ENCODE measurements at regions of chr6 and their contacts with region 1.

Region 1: DNA sequence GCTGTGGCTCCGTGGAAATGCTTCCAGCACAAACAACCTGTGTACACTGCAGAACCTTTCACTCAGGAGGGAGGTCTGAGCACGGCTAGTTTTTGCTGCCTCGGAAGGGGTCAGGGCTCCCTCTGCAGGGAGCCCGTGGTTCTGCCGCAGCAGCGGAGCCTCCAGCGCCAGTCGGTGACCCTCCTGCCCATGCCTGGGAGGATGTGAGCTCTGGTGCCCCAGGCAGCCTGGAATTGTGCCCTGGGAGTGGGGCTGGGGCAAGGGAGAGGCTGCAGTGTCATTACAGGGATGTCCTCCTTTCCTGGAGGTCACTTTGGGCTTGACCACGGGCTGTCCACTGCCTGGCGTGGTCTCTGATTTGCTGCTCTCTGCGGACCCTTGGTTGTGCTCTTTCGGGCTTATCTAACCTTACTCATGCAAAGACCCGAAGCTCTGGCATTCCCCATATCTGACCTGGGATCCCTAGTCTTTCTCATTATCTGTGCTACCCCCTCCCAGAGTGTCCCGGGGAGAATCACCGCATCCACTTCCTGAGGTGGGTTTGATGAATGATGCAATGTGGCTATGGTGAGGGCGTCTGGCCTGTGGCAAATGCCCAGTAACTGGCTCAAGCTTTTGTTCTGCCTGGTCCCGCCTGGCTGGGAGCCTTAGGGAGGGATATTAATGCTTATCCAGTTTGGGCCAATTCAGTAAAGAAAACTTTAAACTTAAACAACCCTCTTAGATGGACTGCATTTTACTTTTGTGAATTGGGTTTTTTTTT is 59.6 kb upstream of the TAGAP start:
- DNase-seq: peak; percentile 82
- ATAC-seq: peak; percentile 62
- H3K4me3 Mint-ChIP-seq: peak overlapping the region; percentile 68
- H3K27ac Mint-ChIP-seq: peak overlapping the region; percentile 91
- H3K4me1 Mint-ChIP-seq: peaks cover 87% of the 10 kb centered on the region
- H3K27me3 Mint-ChIP-seq: no peaks in the 10 kb centered on the region
- CTCF ChIP-seq: peak; percentile 97

Region 2: GRCh38 chr6:158999666-159000403 is 104.5 kb before region 1 on chr6 and contains the start of gene RSPH3:
- CTCF ChIA-PET with region 1: interaction called, 506 read pairs
- POLR2A ChIA-PET with region 1: interaction called, 20 read pairs
- intact Hi-C with region 1: no loop called
- DNase-seq: peak; percentile 96
- ATAC-seq: peak; percentile 89
- H3K4me3 Mint-ChIP-seq: peak within 1 kb of the TSS; percentile 83
- H3K27ac Mint-ChIP-seq: peak within 1 kb of the TSS; percentile 81
- H3K4me1 Mint-ChIP-seq: peaks cover 42% of the 10 kb centered on the region
- H3K27me3 Mint-ChIP-seq: no peaks in the 10 kb centered on the region
- CTCF ChIP-seq: no peak
- total RNA-seq, gene RSPH3: 4.2 TPM

Region 3: GRCh38 chr6:159017757-159018559 is 86.4 kb before region 1 on chr6:
- CTCF ChIA-PET with region 1: interaction called, 506 read pairs
- POLR2A ChIA-PET with region 1: interaction called, 18 read pairs
- intact Hi-C with region 1: loop called (anchors 2 kb)
- DNase-seq: no peak
- ATAC-seq: peak; percentile 85
- H3K4me3 Mint-ChIP-seq: peak overlapping the region; percentile 14
- H3K27ac Mint-ChIP-seq: peak overlapping the region; percentile 96
- H3K4me1 Mint-ChIP-seq: peaks cover 68% of the 10 kb centered on the region
- H3K27me3 Mint-ChIP-seq: no peaks in the 10 kb centered on the region
- CTCF ChIP-seq: no peak

Region 4: GRCh38 chr6:159042003-159042825 is 62.1 kb before region 1 on chr6:
- CTCF ChIA-PET with region 1: interaction called, 289 read pairs
- POLR2A ChIA-PET with region 1: interaction called, 766 read pairs
- intact Hi-C with region 1: loop called (anchors 2 kb)
- DNase-seq: peak; percentile 82
- ATAC-seq: peak; percentile 21
- H3K4me3 Mint-ChIP-seq: peak overlapping the region; percentile 100
- H3K27ac Mint-ChIP-seq: peak overlapping the region; percentile 100
- H3K4me1 Mint-ChIP-seq: peaks cover 53% of the 10 kb centered on the region
- H3K27me3 Mint-ChIP-seq: no peaks in the 10 kb centered on the region
- CTCF ChIP-seq: peak; percentile 96

Region 5: DNA sequence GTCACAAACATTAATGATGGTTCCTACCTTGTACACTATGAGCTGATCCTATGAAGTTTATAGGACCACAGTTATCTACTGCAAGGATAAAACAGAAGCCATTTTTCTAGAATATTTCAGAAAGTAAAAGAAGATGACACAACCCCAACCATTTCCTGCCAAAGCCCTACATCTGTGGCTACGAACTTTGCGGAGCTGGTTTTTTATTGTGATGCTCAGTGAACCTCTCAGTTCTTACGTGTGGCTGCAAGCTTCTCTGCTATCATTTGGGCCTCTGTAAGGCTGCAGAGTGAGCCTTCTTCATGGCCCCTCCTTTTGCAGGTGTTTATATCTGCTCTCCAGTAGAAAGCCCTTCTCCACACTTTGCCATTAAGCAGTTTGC is 41.8 kb before region 1 on chr6:
- CTCF ChIA-PET with region 1: interaction called, 32 read pairs
- POLR2A ChIA-PET with region 1: interaction called, 216 read pairs
- intact Hi-C with region 1: no loop called
- DNase-seq: peak; percentile 84
- ATAC-seq: peak; percentile 79
- H3K4me3 Mint-ChIP-seq: peak overlapping the region; percentile 42
- H3K27ac Mint-ChIP-seq: peak overlapping the region; percentile 95
- H3K4me1 Mint-ChIP-seq: peaks cover 98% of the 10 kb centered on the region
- H3K27me3 Mint-ChIP-seq: no peaks in the 10 kb centered on the region
- CTCF ChIP-seq: no peak

Region 6: GRCh38 chr6:159090530-159091480 is 13.5 kb before region 1 on chr6:
- CTCF ChIA-PET with region 1: interaction called, 28 read pairs
- POLR2A ChIA-PET with region 1: interaction called, 15 read pairs
- intact Hi-C with region 1: no loop called
- DNase-seq: no peak
- ATAC-seq: no peak
- H3K4me3 Mint-ChIP-seq: no peak overlapping the region
- H3K27ac Mint-ChIP-seq: peak overlapping the region; percentile 17
- H3K4me1 Mint-ChIP-seq: peaks cover 73% of the 10 kb centered on the region
- H3K27me3 Mint-ChIP-seq: no peaks in the 10 kb centered on the region
- CTCF ChIP-seq: no peak

Region 7: DNA sequence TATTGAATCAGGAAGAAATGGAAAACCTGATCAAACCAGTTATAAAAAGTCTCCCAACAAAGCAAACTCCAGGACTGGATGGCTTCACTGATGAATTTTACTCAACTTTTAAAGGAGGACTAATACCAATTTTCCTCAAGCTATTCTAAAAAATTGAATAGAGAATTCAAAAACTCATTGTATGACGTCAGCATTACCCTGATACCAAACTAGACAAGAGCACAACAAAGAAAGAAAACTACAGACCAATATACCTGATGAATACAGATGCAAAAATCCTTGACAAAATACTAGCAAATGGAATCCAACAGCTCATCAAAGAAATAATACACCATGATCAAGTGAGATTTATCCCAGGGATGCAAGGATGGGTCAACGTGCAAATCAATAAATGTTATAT is 237.8 kb after region 1 on chr6:
- CTCF ChIA-PET with region 1: no interaction called
- POLR2A ChIA-PET with region 1: no interaction called
- intact Hi-C with region 1: no loop called
- DNase-seq: no peak
- ATAC-seq: no peak
- H3K4me3 Mint-ChIP-seq: no peak overlapping the region
- H3K27ac Mint-ChIP-seq: no peak overlapping the region
- H3K4me1 Mint-ChIP-seq: no peaks in the 10 kb centered on the region
- H3K27me3 Mint-ChIP-seq: peaks cover 8% of the 10 kb centered on the region
- CTCF ChIP-seq: no peak

Region 8: GRCh38 chr6:159505140-159505922 is 401.0 kb after region 1 on chr6:
- CTCF ChIA-PET with region 1: no interaction called
- POLR2A ChIA-PET with region 1: no interaction called
- intact Hi-C with region 1: no loop called
- DNase-seq: no peak
- ATAC-seq: no peak
- H3K4me3 Mint-ChIP-seq: no peak overlapping the region
- H3K27ac Mint-ChIP-seq: no peak overlapping the region
- H3K4me1 Mint-ChIP-seq: no peaks in the 10 kb centered on the region
- H3K27me3 Mint-ChIP-seq: peaks cover 3% of the 10 kb centered on the region
- CTCF ChIP-seq: no peak

Measured in activated CD8-positive, alpha-beta T cell treated with anti-CD3 and anti-CD28 coated beads for 36 hours (primary cell).